Dorsolateral prefrontal cortex (tissue), 120 donors: ENCODE measurements at regions of chr10 and their contacts with region 1.

Region 1: GRCh38 chr10:124728071-124728829 is 15.9 kb downstream of the FAM53B start:
- DNase-seq: peak in 6 of 10 donors; percentile 48 to 83 (median 74)
- H3K4me3 ChIP-seq: peak overlapping the region in 2 of 59 donors; percentile 8 to 18
- H3K27ac ChIP-seq: peak overlapping the region; percentile 81 to 100 (median 97)
- H3K27me3 ChIP-seq: no peaks in the 10 kb centered on the region
- CTCF ChIP-seq: peak in 1 of 56 donors; percentile 14

Region 2: GRCh38 chr10:124547647-124548168 is 180.5 kb before region 1 on chr10:
- intact Hi-C with region 1: no loop called
- DNase-seq: no peak
- H3K4me3 ChIP-seq: no peak overlapping the region
- H3K27ac ChIP-seq: peak overlapping the region in 6 of 59 donors; percentile 8 to 55 (median 19)
- H3K27me3 ChIP-seq: no peaks in the 10 kb centered on the region
- CTCF ChIP-seq: no peak

Region 3: DNA sequence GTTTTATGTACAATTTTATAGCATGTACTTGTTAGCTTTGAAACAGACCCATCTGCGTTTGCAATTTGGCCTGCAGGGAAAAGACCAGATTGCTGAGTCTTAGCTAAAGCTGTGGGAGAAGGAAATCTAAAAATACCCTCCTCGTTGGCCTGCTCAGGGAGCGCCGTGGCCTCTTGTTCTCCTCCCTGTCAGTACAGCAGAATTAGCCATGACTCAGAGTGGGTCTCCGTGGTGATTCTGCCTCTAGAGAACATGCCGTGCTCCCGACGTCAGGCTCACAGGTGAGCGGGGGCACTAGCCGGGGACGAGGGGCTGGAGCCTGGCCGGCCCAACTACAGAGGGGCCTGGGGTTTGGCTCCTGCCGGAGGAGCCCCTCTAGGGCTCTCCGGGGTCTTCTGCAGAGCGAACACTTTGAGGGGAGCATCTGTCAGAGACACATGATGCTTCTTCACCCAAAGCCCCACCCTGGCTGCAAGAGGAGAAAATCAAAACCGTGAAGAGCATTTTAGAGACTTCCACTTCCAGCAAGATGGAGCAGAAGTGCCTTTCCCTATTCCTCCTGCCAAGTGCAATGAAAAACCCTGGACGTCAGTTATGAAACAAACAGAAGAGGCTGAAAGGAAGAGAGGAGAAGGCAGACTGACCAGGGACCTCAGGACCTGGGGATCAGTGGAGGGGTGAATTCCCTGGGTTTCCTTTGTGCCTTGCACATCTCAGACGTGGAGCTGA is 167.7 kb before region 1 on chr10:
- intact Hi-C with region 1: loop called in 1 of 2 experiments (anchors 1 kb)
- DNase-seq: peak in 9 of 10 donors; percentile 47 to 88 (median 73)
- H3K4me3 ChIP-seq: peak overlapping the region in 3 of 59 donors; percentile 13 to 35 (median 32)
- H3K27ac ChIP-seq: peak overlapping the region; percentile 45 to 98 (median 93)
- H3K27me3 ChIP-seq: no peaks in the 10 kb centered on the region
- CTCF ChIP-seq: no peak